Sigmoid colon (tissue), 7 donors: ENCODE measurements at regions of chr12 and their contacts with region 1.

Region 1: GRCh38 chr12:50283229-50283923 is at the start of gene LIMA1:
- DNase-seq: peak; percentile 94
- H3K4me3 ChIP-seq: peak within 1 kb of the TSS; percentile 81 to 88 (median 83)
- H3K27ac ChIP-seq: peak within 1 kb of the TSS; percentile 79 to 84 (median 82)
- H3K4me1 ChIP-seq: peaks cover 0 to 24% (median 9%) of the 10 kb centered on the region in 4 donors
- H3K27me3 ChIP-seq: no peaks in the 10 kb centered on the region
- CTCF ChIP-seq: peak in 2 of 4 experiments; percentile 41 to 52
- EP300 ChIP-seq: no peak
- POLR2A ChIP-seq: peak; percentile 6 to 35
- total RNA-seq, gene LIMA1: 39.7 to 111 (median 41.6) TPM

Region 2: GRCh38 chr12:50222275-50222795 is 61.0 kb before region 1 on chr12:
- intact Hi-C with region 1: loop called (anchors 1 kb)
- DNase-seq: peak; percentile 90
- H3K4me3 ChIP-seq: peak overlapping the region; percentile 41 to 58 (median 52)
- H3K27ac ChIP-seq: peak overlapping the region; percentile 81 to 89 (median 84)
- H3K4me1 ChIP-seq: peaks cover 0 to 44% (median 26%) of the 10 kb centered on the region in 4 donors
- H3K27me3 ChIP-seq: no peaks in the 10 kb centered on the region
- CTCF ChIP-seq: peak in 2 of 4 experiments; percentile 40 to 45
- EP300 ChIP-seq: no peak
- POLR2A ChIP-seq: peak; percentile 17 to 57

Region 3: DNA sequence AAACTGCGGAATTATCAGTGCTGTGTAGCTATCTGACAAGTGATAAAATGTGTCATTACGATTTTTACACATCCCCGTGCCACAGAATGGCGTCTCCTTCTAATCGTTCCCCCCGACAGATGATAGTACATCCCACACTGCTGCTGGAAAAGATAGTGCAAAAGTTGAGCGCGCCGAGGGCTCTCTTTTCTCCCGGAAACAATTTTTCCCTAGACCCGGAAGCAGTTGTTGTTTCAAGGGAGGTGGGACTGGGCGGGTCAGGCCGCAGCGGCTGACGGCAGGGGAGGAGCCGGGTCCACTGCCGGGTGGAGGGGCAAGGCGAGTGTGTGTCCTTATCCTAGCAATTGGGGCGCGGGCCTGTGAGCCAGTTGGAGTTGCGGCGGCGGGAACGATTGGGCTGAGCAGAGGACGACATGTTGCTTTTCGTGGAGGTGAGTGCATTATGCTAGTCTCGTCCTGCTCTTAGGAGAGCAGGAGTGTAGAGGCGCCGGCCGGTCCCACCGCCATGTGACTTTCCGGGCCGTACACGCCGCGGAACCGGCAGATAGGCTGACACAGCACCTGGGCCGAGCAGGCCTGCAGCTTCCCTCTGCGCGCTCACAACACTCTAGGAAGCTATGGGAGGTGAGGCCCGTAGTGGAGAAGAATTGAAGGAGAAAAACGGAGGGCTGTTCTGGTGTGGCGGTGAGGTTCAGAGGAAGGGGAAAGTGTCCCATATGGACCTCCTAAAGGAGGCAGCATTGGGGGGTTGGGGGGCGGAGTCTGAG is 117.4 kb after region 1 on chr12 and contains the start of gene LARP4:
- intact Hi-C with region 1: loop called (anchors 5 kb)
- DNase-seq: peak; percentile 97
- H3K4me3 ChIP-seq: peak within 1 kb of the TSS; percentile 75 to 87 (median 82)
- H3K27ac ChIP-seq: peak within 1 kb of the TSS; percentile 87 to 98 (median 96)
- H3K4me1 ChIP-seq: peaks cover 0 to 40% (median 34%) of the 10 kb centered on the region in 4 donors
- H3K27me3 ChIP-seq: no peaks in the 10 kb centered on the region
- CTCF ChIP-seq: no peak
- EP300 ChIP-seq: no peak
- POLR2A ChIP-seq: peak; percentile 89
- total RNA-seq, gene LARP4: 51.9 to 78.4 (median 59.3) TPM